Posterior vena cava (tissue), 2 donors: ENCODE measurements at regions of chr10 and their contacts with region 1.

Region 1: GRCh38 chr10:109906316-109906715 is 17.0 kb downstream of the XPNPEP1 start:
- DNase-seq: no peak

Region 2: DNA sequence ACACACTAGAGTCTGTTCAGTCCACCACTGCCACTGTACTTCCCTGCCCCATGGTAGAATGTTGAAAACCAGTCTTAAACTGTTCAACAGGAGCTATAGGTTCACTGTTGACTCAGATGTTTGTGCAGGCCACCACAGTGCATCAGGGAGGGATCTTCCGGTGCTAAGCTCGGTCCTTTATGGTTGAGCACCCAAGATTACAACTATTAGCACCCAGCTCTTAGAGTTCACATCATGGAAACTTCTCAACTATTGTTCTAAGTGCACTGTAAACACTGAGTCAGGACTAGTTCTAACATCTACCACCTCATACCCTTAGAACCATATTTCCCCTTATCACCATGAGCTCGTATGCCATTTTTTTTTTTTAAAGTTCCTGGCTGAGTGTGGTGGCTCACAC is 204.0 kb after region 1 on chr10:
- intact Hi-C with region 1: no loop called
- DNase-seq: no peak

Region 3: GRCh38 chr10:110516815-110517645 is 610.7 kb after region 1 on chr10:
- intact Hi-C with region 1: loop called in 1 of 2 experiments (anchors 5 kb)
- DNase-seq: no peak

Region 4: DNA sequence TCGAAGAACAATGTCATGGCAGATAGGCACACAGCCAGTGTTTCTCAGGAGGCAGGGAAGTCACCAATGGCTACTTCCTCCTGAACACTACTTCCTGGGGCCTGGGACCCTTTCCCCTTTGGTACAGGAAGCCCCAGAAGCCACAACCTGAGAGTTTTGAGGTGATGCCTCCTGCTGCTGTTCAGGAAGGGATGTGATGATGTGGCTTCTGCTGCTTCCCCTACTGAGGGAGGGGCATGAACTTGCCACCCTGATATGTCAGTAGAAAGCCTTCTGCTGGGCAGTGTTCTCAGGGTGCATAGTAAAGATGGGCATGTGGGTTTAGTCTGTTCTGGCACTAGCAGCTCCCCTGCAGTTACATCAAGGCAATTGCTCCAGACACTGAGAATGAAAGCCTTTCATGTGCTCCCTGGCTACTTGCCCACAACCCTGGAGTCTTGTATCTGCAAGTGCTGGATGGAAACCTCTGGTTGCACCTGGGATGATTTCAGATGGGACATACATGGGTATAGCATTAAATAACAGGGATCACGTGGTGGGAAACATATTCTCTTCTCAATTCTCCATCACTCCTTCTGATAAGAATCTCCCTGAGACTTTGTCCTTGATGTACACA is 1239.8 kb after region 1 on chr10:
- intact Hi-C with region 1: no loop called
- DNase-seq: no peak